Activated CD8-positive, alpha-beta memory T cell treated with anti-CD3 and anti-CD28 coated beads, Interleukin-2, amount 10 ng/mL, durations not matched to agents 7 days and 5 days (primary cell): ENCODE measurements at regions of chr6 and their contacts with region 1.

Region 1: GRCh38 chr6:391559-392440 is at the start of gene IRF4:
- DNase-seq: peak; percentile 81
- ATAC-seq: peak; percentile 56
- H3K4me3 Mint-ChIP-seq: peak within 1 kb of the TSS; percentile 94
- H3K27ac Mint-ChIP-seq: peak within 1 kb of the TSS; percentile 95
- H3K4me1 Mint-ChIP-seq: peaks cover 53% of the 10 kb centered on the region
- H3K27me3 Mint-ChIP-seq: no peaks in the 10 kb centered on the region
- total RNA-seq, gene IRF4: 184 to 254 TPM

Region 2: GRCh38 chr6:313087-313486 is 78.7 kb before region 1 on chr6:
- CTCF ChIA-PET with region 1: no interaction called
- DNase-seq: no peak
- ATAC-seq: peak; percentile 39
- H3K4me3 Mint-ChIP-seq: no peak overlapping the region
- H3K27ac Mint-ChIP-seq: no peak overlapping the region
- H3K4me1 Mint-ChIP-seq: peaks cover 27% of the 10 kb centered on the region
- H3K27me3 Mint-ChIP-seq: no peaks in the 10 kb centered on the region

Region 3: GRCh38 chr6:337805-338368 is 53.9 kb before region 1 on chr6:
- CTCF ChIA-PET with region 1: interaction called, 18 read pairs
- DNase-seq: no peak
- ATAC-seq: no peak
- H3K4me3 Mint-ChIP-seq: peak overlapping the region; percentile 53
- H3K27ac Mint-ChIP-seq: peak overlapping the region; percentile 79
- H3K4me1 Mint-ChIP-seq: peaks cover 72% of the 10 kb centered on the region
- H3K27me3 Mint-ChIP-seq: no peaks in the 10 kb centered on the region

Region 4: GRCh38 chr6:373751-374724 is 17.8 kb before region 1 on chr6:
- CTCF ChIA-PET with region 1: no interaction called
- DNase-seq: no peak
- ATAC-seq: no peak
- H3K4me3 Mint-ChIP-seq: no peak overlapping the region
- H3K27ac Mint-ChIP-seq: no peak overlapping the region
- H3K4me1 Mint-ChIP-seq: peaks cover 22% of the 10 kb centered on the region
- H3K27me3 Mint-ChIP-seq: peaks cover 44% of the 10 kb centered on the region

Region 5: GRCh38 chr6:436308-437036 is 44.7 kb after region 1 on chr6:
- CTCF ChIA-PET with region 1: no interaction called
- DNase-seq: no peak
- ATAC-seq: no peak
- H3K4me3 Mint-ChIP-seq: no peak overlapping the region
- H3K27ac Mint-ChIP-seq: no peak overlapping the region
- H3K4me1 Mint-ChIP-seq: peaks cover 43% of the 10 kb centered on the region
- H3K27me3 Mint-ChIP-seq: peaks cover 4% of the 10 kb centered on the region

Region 6: GRCh38 chr6:455006-455585 is 63.3 kb after region 1 on chr6:
- CTCF ChIA-PET with region 1: no interaction called
- DNase-seq: peak; percentile 62
- ATAC-seq: peak; percentile 64
- H3K4me3 Mint-ChIP-seq: peak overlapping the region; percentile 8
- H3K27ac Mint-ChIP-seq: no peak overlapping the region
- H3K4me1 Mint-ChIP-seq: peaks cover 14% of the 10 kb centered on the region
- H3K27me3 Mint-ChIP-seq: peaks cover 19% of the 10 kb centered on the region